Caco-2 (cell line): ENCODE measurements at regions of chr10 and their contacts with region 1.

Region 1: DNA sequence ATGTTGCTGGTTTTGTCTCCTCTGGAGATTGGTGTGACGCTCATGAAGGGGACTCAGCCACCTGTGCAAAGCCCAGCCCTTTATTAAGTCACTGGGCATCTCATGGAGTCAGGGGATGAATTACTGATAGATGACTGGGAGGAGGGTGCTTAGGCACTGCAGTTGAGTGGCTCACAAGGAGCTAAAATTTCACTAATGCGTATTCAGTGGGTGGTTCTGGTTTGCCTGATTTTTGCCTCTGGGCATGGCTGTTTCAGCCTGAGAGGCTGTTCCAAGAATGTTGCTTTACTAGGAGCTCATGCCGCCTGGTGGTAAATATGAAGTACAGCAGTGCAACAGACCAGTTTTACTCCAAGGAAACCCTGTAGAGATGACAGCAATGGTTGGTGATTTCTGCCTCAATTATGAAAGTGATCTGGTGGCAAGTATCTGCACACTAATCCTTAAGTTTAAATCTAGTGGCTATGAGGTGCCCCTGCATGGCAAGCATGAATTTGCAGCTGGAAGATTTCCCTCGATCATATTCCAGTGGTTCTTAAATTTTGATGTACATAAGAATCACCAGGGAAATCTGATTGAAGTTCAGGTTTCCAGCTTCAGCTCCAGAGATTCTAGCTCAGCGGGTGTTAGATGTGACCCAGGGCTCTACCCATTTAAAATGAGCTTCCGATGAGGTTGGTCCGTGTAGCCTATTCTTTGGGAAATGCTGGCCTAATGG is 19.9 kb downstream of the ACTA2 start:
- DNase-seq: peak; percentile 69 to 70
- H3K4me3 ChIP-seq: no peak overlapping the region
- H3K4me3 Mint-ChIP-seq: no peak overlapping the region
- H3K27ac Mint-ChIP-seq: no peak overlapping the region
- H3K4me1 ChIP-seq: peaks cover 5% of the 10 kb centered on the region; the same call in 1 of the 2 replicates
- H3K4me1 Mint-ChIP-seq: no peaks in the 10 kb centered on the region
- H3K27me3 ChIP-seq: no peaks in the 10 kb centered on the region
- H3K27me3 Mint-ChIP-seq: peaks cover 2% of the 10 kb centered on the region
- CTCF ChIP-seq: peak; percentile 75 to 87

Region 2: GRCh38 chr10:88835096-88835909 is 97.4 kb before region 1 on chr10:
- CTCF ChIA-PET with region 1: interaction called, 19 read pairs
- POLR2A ChIA-PET with region 1: no interaction called
- intact Hi-C with region 1: loop called (anchors 1 kb)
- DNase-seq: peak; percentile 80 to 86
- H3K4me3 ChIP-seq: no peak overlapping the region
- H3K4me3 Mint-ChIP-seq: no peak overlapping the region
- H3K27ac Mint-ChIP-seq: no peak overlapping the region
- H3K4me1 ChIP-seq: peaks cover 22% of the 10 kb centered on the region
- H3K4me1 Mint-ChIP-seq: peaks cover 7% of the 10 kb centered on the region
- H3K27me3 ChIP-seq: no peaks in the 10 kb centered on the region
- H3K27me3 Mint-ChIP-seq: no peaks in the 10 kb centered on the region
- CTCF ChIP-seq: peak; percentile 84 to 87

Region 3: GRCh38 chr10:88896994-88897853 is 35.5 kb before region 1 on chr10:
- CTCF ChIA-PET with region 1: interaction called, 7 read pairs
- POLR2A ChIA-PET with region 1: no interaction called
- intact Hi-C with region 1: loop called (anchors 1 kb)
- DNase-seq: peak; percentile 49 to 67
- H3K4me3 ChIP-seq: no peak overlapping the region
- H3K4me3 Mint-ChIP-seq: peak overlapping the region; percentile 44
- H3K27ac Mint-ChIP-seq: peak overlapping the region; percentile 76
- H3K4me1 ChIP-seq: peaks cover 60% of the 10 kb centered on the region
- H3K4me1 Mint-ChIP-seq: peaks cover 20% of the 10 kb centered on the region
- H3K27me3 ChIP-seq: no peaks in the 10 kb centered on the region
- H3K27me3 Mint-ChIP-seq: no peaks in the 10 kb centered on the region
- CTCF ChIP-seq: no peak

Region 4: DNA sequence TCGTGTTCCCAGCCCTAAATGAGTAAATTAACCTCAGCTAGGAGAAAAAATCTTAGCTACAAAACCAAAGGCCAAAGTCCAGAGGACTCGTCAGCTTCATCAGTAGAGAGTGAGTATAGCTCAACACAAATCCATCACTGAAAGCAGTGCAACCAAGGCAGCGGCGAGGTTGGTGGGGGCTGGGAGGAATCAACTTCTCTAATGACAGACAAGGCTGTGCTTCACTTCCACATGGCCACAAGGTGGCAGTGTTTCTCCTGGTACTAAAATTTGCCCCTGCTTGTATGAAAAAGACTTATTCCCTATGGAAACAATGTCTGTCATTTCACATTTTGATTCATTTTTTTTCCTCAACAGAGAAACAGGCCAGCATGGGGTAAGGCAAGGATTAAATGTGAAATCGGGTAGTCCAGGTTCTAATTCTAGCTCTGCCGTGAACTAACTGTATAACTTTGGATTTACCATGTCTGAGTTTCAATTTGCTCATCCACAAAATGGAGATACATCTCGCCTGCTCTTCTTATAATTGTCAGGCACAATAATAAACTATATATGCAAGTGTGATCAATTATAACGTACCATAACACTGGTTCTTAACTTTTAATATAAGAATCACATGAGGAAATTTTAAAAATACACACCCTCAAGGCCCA is 97.2 kb after region 1 on chr10:
- CTCF ChIA-PET with region 1: no interaction called
- POLR2A ChIA-PET with region 1: no interaction called
- intact Hi-C with region 1: loop called (anchors 1 kb)
- DNase-seq: peak; percentile 62 to 67
- H3K4me3 ChIP-seq: no peak overlapping the region
- H3K4me3 Mint-ChIP-seq: no peak overlapping the region
- H3K27ac Mint-ChIP-seq: no peak overlapping the region
- H3K4me1 ChIP-seq: no peaks in the 10 kb centered on the region
- H3K4me1 Mint-ChIP-seq: no peaks in the 10 kb centered on the region
- H3K27me3 ChIP-seq: no peaks in the 10 kb centered on the region
- H3K27me3 Mint-ChIP-seq: peaks cover 8% of the 10 kb centered on the region
- CTCF ChIP-seq: peak; percentile 80 to 82